Activated T-helper 2 cell treated with anti-CD3 and anti-CD28 coated beads, Interferon-gamma antibody, Interleukin-2, Interleukin-4, amounts not matched to agents 10 μg/mL and 5 μg/mL and 100 μg/mL, durations not matched to agents 14 hours and 24 hours and 36 hours (primary cell): ENCODE measurements at regions of chr3 and their contacts with region 1.

Region 1: DNA sequence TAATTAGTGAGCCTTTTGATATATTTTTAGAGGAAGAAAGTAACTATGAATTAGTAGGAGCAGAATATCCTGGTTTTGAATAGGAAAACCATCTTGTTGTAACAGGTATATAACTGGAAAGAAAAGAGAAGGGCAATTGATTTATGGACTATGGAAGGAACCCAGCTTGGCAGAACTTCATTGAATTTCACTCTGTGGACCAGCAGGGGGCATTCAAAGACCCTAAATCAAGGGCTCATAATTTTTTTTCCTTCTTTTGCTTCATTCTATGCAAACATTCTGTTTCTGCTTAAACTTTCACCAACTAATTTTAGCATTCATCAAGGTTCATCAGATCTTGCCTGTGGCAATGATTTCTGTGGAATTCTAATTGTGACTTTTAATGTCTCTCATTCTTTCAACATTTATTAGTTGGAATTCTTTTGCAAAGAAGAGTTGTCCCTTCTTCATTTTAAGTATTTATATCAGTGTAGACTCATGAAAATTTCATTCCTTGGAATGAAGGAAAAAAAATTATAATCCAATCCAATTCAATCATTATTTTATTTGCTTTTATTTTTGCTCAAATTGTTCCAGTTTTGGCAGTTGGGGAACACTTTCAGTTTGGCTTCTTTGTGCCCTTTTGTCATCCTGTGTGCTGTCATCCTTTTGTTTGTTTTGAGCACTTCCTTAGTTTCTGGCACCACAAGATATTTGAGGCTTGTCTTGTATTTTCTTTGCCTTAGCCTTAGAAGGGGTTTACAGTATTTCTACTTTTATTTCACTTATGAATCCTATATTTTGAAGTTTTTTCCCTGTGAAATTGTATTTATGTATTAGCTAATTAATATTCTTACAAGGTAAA is 30.4 kb downstream of the NXPE3 start:
- DNase-seq: no peak
- H3K4me3 Mint-ChIP-seq: no peak overlapping the region
- H3K27ac Mint-ChIP-seq: peak overlapping the region; percentile 48
- H3K4me1 Mint-ChIP-seq: peaks cover 51% of the 10 kb centered on the region
- H3K27me3 Mint-ChIP-seq: no peaks in the 10 kb centered on the region

Region 2: GRCh38 chr3:101928890-101929289 is 119.5 kb after region 1 on chr3:
- intact Hi-C with region 1: loop called (anchors 5 kb)
- DNase-seq: no peak
- H3K4me3 Mint-ChIP-seq: no peak overlapping the region
- H3K27ac Mint-ChIP-seq: no peak overlapping the region
- H3K4me1 Mint-ChIP-seq: peaks cover 24% of the 10 kb centered on the region
- H3K27me3 Mint-ChIP-seq: peaks cover 11% of the 10 kb centered on the region